ENCODE measurements at regions of chr17 and their contacts with region 1.

Region 1: DNA sequence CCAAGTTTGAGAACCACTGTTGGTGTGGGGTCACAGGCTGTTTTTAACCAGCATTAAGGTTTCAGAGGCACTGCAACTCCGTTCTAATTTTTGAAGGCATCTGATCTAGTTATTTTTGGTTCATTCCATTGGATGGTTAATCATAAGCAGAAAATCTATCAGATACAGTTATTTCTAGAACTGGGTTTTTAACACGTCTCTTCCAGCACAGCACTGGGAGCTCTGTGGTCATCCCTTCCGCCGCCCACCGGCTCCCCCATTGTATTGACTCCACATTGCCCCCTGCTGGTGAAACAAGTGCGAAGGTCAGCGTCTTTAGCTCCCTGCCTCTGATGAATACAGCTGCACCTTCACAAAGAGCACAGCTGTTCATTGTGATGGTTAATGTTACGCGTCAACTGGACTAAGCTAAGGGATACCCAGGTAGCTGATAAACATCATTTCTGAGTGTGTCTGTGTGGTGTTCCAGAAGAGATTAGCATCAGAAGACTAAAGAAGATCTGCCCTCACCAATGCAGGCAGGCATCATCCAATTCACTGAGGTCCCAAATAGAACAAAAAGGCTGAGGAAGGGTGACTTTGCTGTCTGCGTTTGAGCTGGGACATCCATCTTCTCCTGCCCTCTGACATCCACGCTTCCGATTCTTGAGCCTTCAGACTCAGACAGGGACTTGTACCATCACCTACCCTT is 8.5 kb downstream of the CCL18 start:
- DNase-seq: peak; percentile 77
- CTCF ChIP-seq: peak; percentile 67

Region 2: DNA sequence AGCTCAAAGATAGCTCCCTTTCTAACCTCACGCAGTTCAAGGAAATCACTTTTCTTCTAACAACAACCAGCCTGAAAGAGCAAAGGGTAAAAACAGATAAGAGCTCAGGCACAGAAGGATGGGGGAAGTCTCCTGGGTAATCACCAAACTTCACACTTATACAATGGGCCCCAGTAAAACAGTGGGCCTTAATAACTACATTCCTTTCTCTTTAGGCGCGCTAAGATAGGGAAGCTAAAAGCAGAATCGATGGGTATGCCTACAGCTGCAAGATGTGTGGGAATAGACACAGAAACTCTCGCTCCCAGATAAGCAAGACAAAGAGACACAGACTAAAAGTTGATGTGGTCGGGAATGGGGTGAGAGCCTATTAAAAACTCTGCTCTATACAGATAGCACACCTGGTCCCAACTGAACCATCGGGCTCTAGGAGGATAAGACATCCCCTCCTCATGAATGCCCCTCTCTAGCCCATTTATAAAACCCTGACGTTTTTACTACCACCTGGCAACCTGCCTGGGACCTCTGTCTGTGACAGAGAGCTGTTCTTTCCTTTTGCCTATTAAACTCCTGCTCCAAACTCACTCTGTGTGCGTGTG is 129.9 kb before region 1 on chr17:
- CTCF ChIA-PET with region 1: no interaction called
- POLR2A ChIA-PET with region 1: no interaction called
- DNase-seq: no peak
- CTCF ChIP-seq: no peak

Region 3: DNA sequence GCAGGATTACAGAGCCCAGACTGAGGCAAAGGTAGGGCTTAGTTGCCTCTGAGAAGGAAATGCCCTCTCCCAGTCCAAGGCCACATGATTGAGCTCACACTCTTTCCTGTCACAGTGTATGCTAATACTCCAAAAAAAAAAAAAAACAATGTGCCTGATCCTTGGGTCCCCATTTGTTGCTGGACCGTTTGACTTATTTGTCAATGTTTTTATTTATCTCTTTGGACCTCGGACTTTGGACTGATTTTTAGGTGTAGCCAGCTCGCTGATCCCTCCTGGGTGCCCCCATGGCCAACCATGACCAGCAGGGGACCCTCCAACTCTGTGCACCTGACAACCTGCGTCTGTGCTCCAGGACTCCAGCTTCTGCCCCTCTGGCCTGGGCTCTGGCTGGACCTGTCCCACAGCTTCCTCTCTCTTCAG is 90.7 kb before region 1 on chr17:
- CTCF ChIA-PET with region 1: interaction called, 22 read pairs
- POLR2A ChIA-PET with region 1: no interaction called
- DNase-seq: no peak
- CTCF ChIP-seq: peak; percentile 35

Region 4: GRCh38 chr17:36017799-36018198 is 54.8 kb before region 1 on chr17 and contains the start of gene CCL23:
- CTCF ChIA-PET with region 1: interaction called, 15 read pairs
- POLR2A ChIA-PET with region 1: no interaction called
- DNase-seq: no peak
- CTCF ChIP-seq: no peak

Region 5: GRCh38 chr17:36057911-36058310 is 14.7 kb before region 1 on chr17:
- CTCF ChIA-PET with region 1: interaction called, 67 read pairs
- POLR2A ChIA-PET with region 1: no interaction called
- DNase-seq: no peak
- CTCF ChIP-seq: no peak

Region 6: GRCh38 chr17:36117505-36118382 is 45.2 kb after region 1 on chr17:
- CTCF ChIA-PET with region 1: interaction called, 29 read pairs
- POLR2A ChIA-PET with region 1: no interaction called
- DNase-seq: peak; percentile 41
- CTCF ChIP-seq: no peak

Region 7: DNA sequence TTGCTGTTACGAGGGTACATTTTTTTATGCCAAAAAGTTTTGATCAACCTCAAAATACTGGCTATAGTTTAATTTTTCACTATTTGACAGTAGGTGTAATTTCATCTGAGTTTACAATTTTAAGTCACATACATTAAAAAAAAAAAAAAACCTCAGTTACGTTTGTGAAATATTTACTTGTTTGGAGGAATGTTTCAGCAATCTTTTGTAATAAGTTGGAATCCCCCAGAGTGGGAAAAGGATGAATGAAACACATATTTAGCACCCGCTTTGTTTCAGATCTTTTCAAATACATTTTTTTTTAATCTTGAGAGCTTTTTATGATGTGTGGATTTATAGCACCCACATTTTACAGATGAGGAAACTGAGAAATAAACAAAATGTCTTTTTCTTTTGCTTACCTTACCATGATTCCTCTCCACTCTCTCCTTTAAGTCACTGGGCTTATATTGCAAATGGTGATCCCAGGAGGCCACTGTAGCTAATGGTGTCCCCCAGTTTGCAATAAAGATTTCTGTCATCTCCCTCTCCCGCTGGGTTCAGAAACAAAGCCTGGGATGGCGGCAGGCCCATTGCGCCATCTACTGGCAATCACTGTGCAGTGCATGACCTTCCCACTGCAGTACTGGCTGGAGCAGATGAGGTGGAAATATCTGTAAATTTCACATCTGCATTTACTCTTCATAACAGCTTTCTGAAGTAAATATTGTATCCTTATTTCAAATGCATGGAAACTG is 76.2 kb after region 1 on chr17:
- CTCF ChIA-PET with region 1: interaction called, 131 read pairs
- POLR2A ChIA-PET with region 1: no interaction called
- DNase-seq: peak; percentile 80
- CTCF ChIP-seq: peak; percentile 99